Activated CD8-positive, alpha-beta T cell treated with anti-CD3 and anti-CD28 coated beads, Interleukin-2, amount 10 ng/mL, durations not matched to agents 7 days and 5 days (primary cell): ENCODE measurements at regions of chr16 and their contacts with region 1.

Region 1: GRCh38 chr16:50747207-50747956 is 5.5 kb downstream of the CYLD start:
- DNase-seq: peak; percentile 61
- ATAC-seq: peak; percentile 72
- H3K4me3 Mint-ChIP-seq: peak overlapping the region; percentile 80
- H3K27ac Mint-ChIP-seq: peak overlapping the region; percentile 95
- H3K4me1 Mint-ChIP-seq: peaks cover 61% of the 10 kb centered on the region
- H3K27me3 Mint-ChIP-seq: no peaks in the 10 kb centered on the region

Region 2: DNA sequence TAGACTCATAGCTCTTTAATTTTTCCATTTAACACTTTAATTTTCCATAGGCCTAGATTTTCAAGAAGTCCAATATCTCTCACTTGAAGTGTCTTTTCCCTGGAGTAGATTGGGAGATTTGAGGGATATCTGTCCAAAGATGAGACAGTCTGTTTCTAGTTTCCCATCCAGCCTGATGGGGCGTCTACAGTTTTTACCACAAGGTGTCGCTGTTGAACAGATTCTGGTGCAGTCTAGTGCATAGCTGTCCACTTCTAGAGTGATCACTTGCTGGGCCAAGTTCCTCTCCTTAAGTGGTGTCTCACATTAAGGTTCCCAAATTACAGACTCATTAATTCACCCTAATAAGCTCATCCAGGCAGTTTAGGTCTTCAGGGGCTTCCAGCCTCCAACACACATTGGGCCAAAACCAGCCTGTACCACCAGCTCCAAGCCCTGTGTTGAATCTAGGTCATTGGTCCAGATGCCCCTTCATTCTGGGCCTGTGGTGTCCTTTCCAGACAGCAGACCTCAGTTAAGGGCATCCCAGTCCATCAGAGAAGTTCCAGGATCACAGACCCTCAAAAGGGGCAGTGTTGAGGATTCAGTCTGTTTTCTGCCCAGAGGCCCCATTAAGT is 75.6 kb before region 1 on chr16:
- CTCF ChIA-PET with region 1: interaction called, 567 read pairs
- POLR2A ChIA-PET with region 1: interaction called, 58 read pairs
- DNase-seq: peak; percentile 74
- ATAC-seq: peak; percentile 14
- H3K4me3 Mint-ChIP-seq: no peak overlapping the region
- H3K27ac Mint-ChIP-seq: no peak overlapping the region
- H3K4me1 Mint-ChIP-seq: peaks cover 40% of the 10 kb centered on the region
- H3K27me3 Mint-ChIP-seq: no peaks in the 10 kb centered on the region

Region 3: GRCh38 chr16:50681021-50681885 is 66.1 kb before region 1 on chr16 and contains the start of gene SNX20:
- CTCF ChIA-PET with region 1: interaction called, 567 read pairs
- POLR2A ChIA-PET with region 1: interaction called, 23 read pairs
- DNase-seq: peak; percentile 77
- ATAC-seq: peak; percentile 81
- H3K4me3 Mint-ChIP-seq: peak within 1 kb of the TSS; percentile 82
- H3K27ac Mint-ChIP-seq: peak within 1 kb of the TSS; percentile 89
- H3K4me1 Mint-ChIP-seq: peaks cover 84% of the 10 kb centered on the region
- H3K27me3 Mint-ChIP-seq: no peaks in the 10 kb centered on the region
- total RNA-seq, gene SNX20: 64.8 to 65.3 TPM

Region 4: DNA sequence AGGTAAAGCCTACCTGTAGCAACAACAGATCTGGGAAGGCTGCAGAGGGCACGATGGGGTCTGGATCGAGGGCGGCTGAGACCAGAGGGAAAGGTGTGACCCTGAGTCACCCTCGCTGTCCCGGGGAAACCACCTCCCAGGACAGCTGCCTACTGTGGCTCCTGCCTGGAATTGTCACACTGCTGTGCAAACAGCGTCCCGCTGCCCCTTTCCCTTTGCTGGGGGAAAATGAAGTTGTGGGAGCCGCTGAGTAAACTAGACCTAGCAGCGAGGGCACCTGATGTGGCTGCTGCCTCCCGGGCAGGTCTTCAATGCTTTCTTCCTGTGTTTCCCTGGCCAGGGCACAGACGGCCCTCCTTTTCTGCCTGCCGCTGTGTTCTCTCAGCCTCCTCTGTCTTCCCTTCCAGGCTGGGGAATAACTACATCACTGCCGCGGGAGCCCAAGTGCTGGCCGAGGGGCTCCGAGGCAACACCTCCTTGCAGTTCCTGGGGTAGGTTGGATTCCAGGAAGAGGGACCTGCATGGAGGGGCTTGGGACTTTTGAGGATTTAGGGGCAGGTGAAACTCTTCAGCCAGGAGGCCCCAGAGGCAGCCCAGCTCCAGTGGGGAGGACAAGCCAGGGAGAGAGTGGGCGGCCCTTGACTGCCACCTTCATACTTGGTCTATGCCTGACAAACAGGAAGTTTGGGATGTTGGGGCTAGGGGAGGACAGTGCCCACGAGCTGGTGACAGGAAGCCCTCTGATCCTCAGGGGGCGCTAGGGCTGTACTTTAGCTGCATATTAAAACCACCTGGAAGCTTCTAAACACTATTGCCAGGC is 27.7 kb before region 1 on chr16:
- CTCF ChIA-PET with region 1: interaction called, 29 read pairs
- POLR2A ChIA-PET with region 1: interaction called, 10 read pairs
- DNase-seq: peak; percentile 38
- ATAC-seq: peak; percentile 73
- H3K4me3 Mint-ChIP-seq: no peak overlapping the region
- H3K27ac Mint-ChIP-seq: peak overlapping the region; percentile 75
- H3K4me1 Mint-ChIP-seq: peaks cover 45% of the 10 kb centered on the region
- H3K27me3 Mint-ChIP-seq: no peaks in the 10 kb centered on the region

Region 5: DNA sequence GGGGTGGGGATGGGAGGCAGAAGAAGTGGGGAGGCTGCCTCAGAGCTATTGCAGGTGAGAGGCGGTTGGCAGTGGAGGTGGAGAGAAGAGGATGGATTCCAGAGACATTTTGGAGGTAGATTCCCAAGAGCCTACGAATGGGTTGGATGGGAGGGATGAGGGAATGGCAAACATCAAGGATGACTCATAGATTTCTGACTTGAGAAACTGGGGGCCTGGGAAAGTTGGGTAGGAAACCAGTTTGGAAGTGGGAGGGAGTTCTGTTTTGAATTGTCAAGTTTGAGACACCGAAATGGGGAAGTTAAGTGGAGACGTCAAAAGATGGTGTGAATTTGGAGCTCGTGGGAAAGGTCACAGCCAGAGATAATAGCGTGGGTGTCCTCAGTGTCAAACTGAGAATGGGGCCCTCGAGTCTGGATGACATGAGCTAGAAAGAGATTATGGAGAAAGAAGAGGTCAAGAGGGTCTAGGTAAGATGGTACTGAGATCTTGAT is 11.7 kb before region 1 on chr16:
- CTCF ChIA-PET with region 1: interaction called, 18 read pairs
- POLR2A ChIA-PET with region 1: no interaction called
- DNase-seq: no peak
- ATAC-seq: no peak
- H3K4me3 Mint-ChIP-seq: no peak overlapping the region
- H3K27ac Mint-ChIP-seq: no peak overlapping the region
- H3K4me1 Mint-ChIP-seq: peaks cover 23% of the 10 kb centered on the region
- H3K27me3 Mint-ChIP-seq: no peaks in the 10 kb centered on the region

Region 6: GRCh38 chr16:51762081-51762996 is 1015.0 kb after region 1 on chr16:
- CTCF ChIA-PET with region 1: no interaction called
- POLR2A ChIA-PET with region 1: no interaction called
- DNase-seq: peak; percentile 59
- ATAC-seq: peak; percentile 67
- H3K4me3 Mint-ChIP-seq: no peak overlapping the region
- H3K27ac Mint-ChIP-seq: no peak overlapping the region
- H3K4me1 Mint-ChIP-seq: no peaks in the 10 kb centered on the region
- H3K27me3 Mint-ChIP-seq: peaks cover 3% of the 10 kb centered on the region